ENCODE measurements at regions of chr15 and their contacts with region 1.

Region 1: DNA sequence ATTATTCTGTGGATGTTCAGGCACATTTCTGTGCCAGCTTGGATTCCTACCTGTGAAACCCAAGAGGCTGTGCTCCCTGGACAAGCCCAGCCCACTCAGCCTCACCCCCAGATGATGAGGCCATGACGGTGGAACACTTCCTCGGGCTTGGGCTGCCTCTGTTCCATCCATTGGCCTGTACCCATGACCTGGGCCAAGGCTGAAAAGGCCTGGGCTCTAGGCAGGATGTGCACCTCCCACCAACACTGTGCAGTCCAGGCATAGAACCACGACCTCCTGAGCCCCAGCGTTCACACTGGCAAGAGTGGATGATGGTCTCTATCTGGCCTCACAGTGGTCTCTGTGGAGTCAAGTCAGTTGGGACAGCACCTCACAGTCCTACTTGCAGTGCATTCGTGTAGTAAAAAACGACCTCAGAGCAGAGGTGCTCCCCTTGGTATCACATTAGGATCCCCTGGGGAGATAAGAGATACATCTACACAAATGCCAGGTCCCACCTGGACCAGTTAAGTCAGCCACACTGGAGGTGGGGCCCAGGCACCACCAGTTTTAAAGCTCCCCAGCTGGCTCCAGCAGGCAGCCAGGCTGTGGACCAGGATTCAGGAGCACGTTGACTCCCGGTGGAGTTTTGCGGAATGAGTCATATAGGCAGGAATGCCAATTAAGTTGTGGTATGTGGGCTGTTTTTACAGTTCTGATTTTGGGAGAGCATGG is 39.0 kb upstream of the IGF1R start:
- DNase-seq: peak; percentile 66
- H3K4me3 Mint-ChIP-seq: no peak overlapping the region
- H3K27ac Mint-ChIP-seq: no peak overlapping the region
- H3K4me1 Mint-ChIP-seq: peaks cover 14% of the 10 kb centered on the region
- H3K27me3 Mint-ChIP-seq: peaks cover 17% of the 10 kb centered on the region
- CTCF ChIP-seq: no peak

Region 2: DNA sequence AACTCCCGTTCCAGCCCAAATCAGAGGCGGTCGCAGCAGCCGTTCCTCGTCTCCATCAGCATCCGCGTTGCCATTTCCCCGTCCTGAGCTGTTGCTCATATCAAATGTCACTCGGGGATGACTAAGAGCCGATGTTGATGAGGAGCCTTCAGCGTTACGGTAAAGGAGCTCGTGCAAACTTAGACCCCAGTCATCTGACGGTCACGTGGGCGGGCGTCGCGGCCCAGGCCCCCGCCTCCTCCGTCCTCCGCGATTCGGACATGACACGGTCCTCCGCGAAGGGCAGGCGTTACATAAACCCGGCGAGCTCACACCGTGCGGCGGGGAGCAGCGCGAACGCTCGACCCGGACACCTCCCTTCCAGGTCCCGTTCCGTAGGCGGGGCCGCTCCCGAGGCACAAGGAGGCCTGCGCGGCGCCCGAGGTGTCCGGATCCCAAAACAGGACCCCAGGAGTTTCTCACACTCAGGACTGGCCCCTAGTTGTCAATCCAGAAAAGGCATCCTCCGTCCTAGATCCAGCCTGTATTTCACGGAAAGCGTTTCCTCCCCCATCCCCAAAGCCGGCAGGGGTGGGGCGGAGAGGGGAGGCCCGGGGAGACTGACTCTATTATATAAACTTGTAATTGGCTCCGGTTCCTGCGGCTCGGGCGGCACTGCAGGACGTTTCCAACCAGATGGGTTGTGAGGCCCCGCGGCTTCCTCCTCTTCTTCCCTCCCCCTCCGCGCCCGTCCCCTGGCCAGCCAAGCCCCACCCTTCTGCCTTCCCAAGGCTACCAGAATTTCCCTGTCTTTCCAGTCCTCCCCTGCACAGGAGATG is 60.9 kb before region 1 on chr15:
- CTCF ChIA-PET with region 1: no interaction called
- intact Hi-C with region 1: no loop called
- DNase-seq: peak; percentile 55
- H3K4me3 Mint-ChIP-seq: peak overlapping the region; percentile 78
- H3K27ac Mint-ChIP-seq: no peak overlapping the region
- H3K4me1 Mint-ChIP-seq: no peaks in the 10 kb centered on the region
- H3K27me3 Mint-ChIP-seq: peaks cover 77% of the 10 kb centered on the region
- CTCF ChIP-seq: no peak

Region 3: DNA sequence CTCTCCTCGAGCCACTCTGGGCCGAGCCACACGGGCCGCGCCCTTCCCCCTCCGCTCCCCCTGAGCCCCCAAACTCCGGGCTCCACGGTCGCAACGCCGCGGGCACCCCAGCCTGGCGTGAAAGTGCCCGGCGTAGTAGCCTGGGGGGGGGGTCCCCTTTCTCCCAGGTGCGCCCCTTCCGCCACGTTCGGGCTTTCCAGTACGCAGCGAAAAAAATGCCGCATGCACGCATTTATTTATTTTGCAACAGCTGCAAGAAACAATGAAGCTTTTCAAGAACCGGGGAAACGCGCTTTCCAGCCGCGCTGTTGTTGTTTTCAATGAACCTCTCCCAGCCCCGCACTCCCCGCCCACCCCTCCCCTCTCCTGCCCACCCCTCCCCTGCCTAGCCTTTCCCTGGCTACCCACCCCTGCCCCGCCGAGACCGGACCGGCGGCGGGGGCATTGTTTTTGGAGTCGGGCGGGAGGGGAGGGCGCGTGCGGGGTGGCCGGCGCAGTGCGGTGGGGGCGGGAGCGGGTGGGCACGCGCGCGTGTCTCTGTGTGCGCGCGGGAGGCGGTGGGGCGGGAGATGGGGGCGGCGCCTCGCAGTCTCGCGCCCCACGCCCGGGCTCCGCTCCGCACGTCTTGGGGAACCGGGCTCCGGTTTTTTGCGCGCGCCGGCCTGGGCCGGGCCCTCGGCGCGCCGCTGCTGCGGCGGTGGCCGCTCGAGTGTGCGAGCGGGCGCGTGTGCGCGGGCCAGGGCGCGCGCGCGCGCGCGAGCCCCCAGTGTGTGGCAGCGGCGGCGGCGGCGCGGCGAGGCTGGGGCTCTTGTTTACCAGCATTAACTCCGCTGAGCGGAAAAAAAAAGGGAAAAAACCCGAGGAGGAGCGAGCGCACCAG is 38.7 kb after region 1 on chr15 and contains the start of gene IGF1R:
- CTCF ChIA-PET with region 1: interaction called, 4 read pairs
- intact Hi-C with region 1: loop called (anchors 1 kb)
- DNase-seq: peak; percentile 96
- H3K4me3 Mint-ChIP-seq: peak within 1 kb of the TSS; percentile 96
- H3K27ac Mint-ChIP-seq: peak within 1 kb of the TSS; percentile 85
- H3K4me1 Mint-ChIP-seq: peaks cover 16% of the 10 kb centered on the region
- H3K27me3 Mint-ChIP-seq: no peaks in the 10 kb centered on the region
- CTCF ChIP-seq: no peak
- total RNA-seq, gene IGF1R: 55.5 and 73.9 TPM in 2 replicates

Measured in Calu3 (cell line).